Left ventricle myocardium inferior (tissue), 1 donor: ENCODE measurements at regions of chr3 and their contacts with region 1.

Region 1: GRCh38 chr3:47989981-47990440 is 26.2 kb downstream of the MAP4 start:
- DNase-seq: peak; percentile 58
- H3K4me3 ChIP-seq: no peak overlapping the region
- H3K27ac ChIP-seq: peak overlapping the region; percentile 29
- H3K4me1 ChIP-seq: peaks cover 59% of the 10 kb centered on the region
- H3K27me3 ChIP-seq: no peaks in the 10 kb centered on the region
- CTCF ChIP-seq: peak; percentile 95

Region 2: GRCh38 chr3:47836986-47837385 is 153.0 kb before region 1 on chr3:
- intact Hi-C with region 1: loop called (anchors 10 kb)
- DNase-seq: no peak
- H3K4me3 ChIP-seq: no peak overlapping the region
- H3K27ac ChIP-seq: no peak overlapping the region
- H3K4me1 ChIP-seq: peaks cover 18% of the 10 kb centered on the region
- H3K27me3 ChIP-seq: no peaks in the 10 kb centered on the region
- CTCF ChIP-seq: no peak

Region 3: DNA sequence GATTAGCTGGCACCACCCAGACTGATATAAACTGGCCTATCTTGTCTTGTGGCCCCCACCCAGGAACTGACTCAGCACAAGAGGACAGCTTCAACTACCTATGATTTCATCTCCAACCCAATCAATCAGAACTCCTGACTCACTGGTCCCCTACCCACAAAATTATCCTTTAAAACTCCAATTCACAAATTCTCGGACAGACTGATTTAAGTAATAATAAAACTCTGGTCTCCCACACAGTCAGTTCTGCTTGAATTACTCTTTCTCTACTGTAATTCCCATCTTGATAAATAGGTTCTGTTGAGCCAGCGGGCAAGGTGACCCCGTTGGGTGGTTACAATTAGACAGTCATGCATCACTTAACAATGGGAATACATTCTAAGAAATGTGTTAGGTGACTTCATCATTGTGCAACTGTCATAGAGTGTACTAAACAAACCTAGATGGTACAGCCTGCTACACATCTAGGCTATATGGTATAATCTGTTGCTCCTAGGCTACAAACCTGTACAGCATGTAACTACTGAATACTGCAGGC is 74.3 kb after region 1 on chr3:
- intact Hi-C with region 1: no loop called
- DNase-seq: no peak
- H3K4me3 ChIP-seq: no peak overlapping the region
- H3K27ac ChIP-seq: peak overlapping the region; percentile 24
- H3K4me1 ChIP-seq: peaks cover 77% of the 10 kb centered on the region
- H3K27me3 ChIP-seq: no peaks in the 10 kb centered on the region
- CTCF ChIP-seq: no peak

Region 4: DNA sequence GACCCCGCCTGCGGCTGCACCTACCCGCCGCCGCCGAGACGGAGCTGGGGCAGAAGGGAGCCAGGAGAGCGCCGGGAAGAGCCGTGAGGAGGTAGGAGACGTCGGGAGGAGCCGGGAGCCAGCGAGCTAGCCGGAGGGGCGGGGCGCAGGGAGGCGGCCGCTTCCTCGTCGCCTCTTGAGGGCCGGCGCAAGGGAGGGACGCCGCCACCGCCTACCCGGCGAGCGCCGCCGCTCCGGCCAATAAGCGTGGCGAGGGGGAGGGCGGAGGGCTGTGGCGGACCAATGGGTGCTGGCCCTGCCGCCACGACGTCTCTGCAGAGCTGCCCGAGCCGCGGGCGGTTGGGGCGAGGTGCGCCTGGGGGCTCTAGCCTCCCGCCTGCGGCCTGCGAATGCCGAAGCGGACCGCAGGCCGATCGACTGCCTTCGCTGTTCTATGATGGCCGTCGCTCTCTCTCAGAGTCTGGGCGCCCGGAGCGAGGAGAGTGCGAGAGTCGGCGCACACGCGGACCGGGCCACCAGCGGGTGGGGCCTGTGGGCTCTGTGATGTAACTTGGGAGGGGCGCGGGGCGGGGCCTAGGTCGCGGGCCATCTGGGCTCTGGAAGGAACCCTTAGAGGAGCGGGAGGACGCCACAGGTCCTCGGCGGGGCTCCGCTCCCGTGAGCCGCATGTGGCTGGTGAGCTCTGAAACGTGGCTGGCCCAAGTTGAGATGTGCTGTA is 98.9 kb after region 1 on chr3:
- intact Hi-C with region 1: loop called (anchors 10 kb)
- DNase-seq: peak; percentile 98
- H3K4me3 ChIP-seq: peak overlapping the region; percentile 84
- H3K27ac ChIP-seq: peak overlapping the region; percentile 97
- H3K4me1 ChIP-seq: peaks cover 49% of the 10 kb centered on the region
- H3K27me3 ChIP-seq: no peaks in the 10 kb centered on the region
- CTCF ChIP-seq: no peak

Region 5: DNA sequence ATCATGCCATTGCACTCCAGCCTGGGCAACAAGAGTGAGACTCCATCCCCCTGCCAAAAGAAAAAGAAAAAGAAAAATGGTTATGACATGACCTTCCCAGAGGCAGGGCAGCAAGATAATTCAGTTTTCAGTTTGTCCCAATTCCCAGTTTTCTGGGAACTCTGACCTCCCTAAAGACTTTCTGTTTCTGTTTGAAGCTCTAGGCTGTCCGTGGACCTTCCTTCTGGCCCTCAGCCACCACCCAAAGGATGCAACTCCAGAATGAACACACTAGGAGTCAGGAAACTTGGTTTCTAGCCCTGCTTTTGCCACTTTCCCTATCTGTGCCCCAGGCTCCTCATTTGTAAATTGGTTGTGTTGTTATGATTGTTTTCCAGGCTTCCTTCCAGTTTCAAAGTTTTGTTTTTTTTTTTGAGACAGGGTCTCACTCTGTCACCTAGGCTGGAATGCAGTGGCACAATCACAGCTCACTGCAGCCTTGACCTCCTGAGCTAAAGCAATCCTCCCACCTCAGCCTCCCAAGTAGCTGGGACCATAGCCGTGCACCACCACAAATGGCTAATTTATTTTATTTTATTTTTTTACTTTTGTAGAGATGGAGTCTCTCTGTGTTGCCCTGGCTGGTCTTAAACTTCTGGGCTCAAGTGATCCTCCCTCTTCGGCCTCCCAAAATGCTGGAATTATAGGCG is 129.6 kb after region 1 on chr3:
- intact Hi-C with region 1: no loop called
- DNase-seq: peak; percentile 61
- H3K4me3 ChIP-seq: no peak overlapping the region
- H3K27ac ChIP-seq: peak overlapping the region; percentile 75
- H3K4me1 ChIP-seq: peaks cover 11% of the 10 kb centered on the region
- H3K27me3 ChIP-seq: no peaks in the 10 kb centered on the region
- CTCF ChIP-seq: no peak

Region 6: GRCh38 chr3:48151058-48151806 is 161.2 kb after region 1 on chr3:
- intact Hi-C with region 1: loop called (anchors 10 kb)
- DNase-seq: peak; percentile 72
- H3K4me3 ChIP-seq: peak overlapping the region; percentile 12
- H3K27ac ChIP-seq: peak overlapping the region; percentile 78
- H3K4me1 ChIP-seq: peaks cover 21% of the 10 kb centered on the region
- H3K27me3 ChIP-seq: no peaks in the 10 kb centered on the region
- CTCF ChIP-seq: peak; percentile 93

Region 7: DNA sequence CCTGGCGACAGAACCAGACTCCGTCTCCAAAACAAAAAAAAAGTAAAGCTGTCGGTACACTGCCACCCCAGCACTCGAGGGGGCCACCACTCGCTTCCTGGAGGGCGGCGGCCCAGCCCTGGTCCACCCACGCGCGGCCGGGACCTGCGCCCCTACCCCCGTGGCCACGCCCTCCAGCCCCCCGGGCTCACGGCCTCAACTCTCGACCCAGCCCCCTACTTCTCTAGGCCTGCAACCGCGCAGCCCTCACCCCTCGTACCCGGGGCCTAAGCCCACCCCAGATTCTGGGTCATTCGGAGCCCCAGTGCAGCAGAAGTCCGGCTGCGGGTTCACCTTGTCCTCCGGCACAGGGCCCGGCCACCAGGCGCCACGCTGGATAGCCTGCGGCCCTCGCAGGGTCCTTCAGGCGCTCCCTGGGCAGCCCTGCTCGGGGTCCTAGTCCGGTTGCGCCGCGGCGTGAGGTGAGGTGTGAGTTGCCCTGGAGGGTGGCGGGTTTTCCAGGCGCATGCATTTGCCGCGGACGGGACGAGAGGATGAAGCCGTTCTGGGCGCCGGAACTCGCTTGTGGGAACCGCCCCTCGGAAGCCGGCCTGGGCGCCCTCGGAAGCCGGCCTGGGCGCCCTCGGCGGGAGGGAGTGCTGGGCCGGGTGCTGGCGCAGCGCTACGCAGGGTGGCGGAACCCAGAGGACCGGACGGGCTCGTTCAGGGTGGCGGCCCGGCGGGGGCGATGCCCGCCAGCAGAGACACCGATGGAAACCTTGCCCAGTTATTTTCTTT is 311.2 kb after region 1 on chr3:
- intact Hi-C with region 1: no loop called
- DNase-seq: peak; percentile 94
- H3K4me3 ChIP-seq: peak within 1 kb of the TSS; percentile 95
- H3K27ac ChIP-seq: peak within 1 kb of the TSS; percentile 99
- H3K4me1 ChIP-seq: peaks cover 31% of the 10 kb centered on the region
- H3K27me3 ChIP-seq: no peaks in the 10 kb centered on the region
- CTCF ChIP-seq: peak; percentile 28